CD8-positive, alpha-beta T cell (primary cell): ENCODE measurements at regions of chrX and their contacts with region 1.

Region 1: DNA sequence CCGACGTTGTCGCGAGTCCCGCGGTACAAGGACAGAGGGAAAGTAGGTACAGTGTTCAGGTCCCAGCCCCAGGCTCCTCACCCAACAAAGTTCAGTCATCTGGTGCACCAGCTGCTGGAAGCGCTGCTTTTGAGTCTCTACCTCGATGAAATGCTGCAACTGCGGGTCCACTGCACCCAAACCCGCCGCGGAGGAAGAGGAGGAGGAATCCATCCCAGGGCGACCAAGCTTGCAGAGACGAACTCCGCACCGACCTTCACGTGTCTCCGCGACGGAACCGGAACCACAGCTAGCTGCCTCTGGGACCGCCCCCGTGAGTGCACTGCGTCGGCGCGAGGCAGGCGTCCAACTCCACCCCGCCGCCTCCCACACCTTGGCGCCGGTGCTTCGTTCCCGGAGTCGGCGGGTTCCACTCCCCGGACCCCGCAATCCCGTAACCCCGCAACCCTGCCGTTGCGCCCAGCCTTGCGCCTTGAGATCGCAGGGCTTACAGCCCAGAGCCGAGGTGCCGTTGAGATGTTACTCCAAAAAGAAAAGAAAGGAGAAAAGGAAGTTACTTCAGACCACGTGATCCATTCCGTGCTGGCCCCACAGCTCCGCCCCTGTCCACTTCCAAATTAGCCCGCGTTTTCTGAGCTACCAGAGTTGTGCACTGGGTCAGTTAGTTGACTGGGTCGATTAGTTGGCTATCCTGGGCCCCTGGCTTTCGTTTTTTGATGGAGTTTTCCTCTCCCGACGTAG is at the start of gene TIMM8A:
- DNase-seq: peak; percentile 50 to 85 (median 77)
- ATAC-seq: peak; percentile 98
- H3K4me3 ChIP-seq: peak within 1 kb of the TSS; percentile 90 to 97
- H3K4me3 Mint-ChIP-seq: peak within 1 kb of the TSS; percentile 91
- H3K27ac ChIP-seq: peak within 1 kb of the TSS; percentile 78 to 90
- H3K27ac Mint-ChIP-seq: peak within 1 kb of the TSS; percentile 91
- H3K4me1 ChIP-seq: peaks cover 9% of the 10 kb centered on the region
- H3K4me1 Mint-ChIP-seq: peaks cover 16% of the 10 kb centered on the region
- H3K27me3 ChIP-seq: no peaks in the 10 kb centered on the region
- H3K27me3 Mint-ChIP-seq: no peaks in the 10 kb centered on the region
- CTCF ChIP-seq: no peak
- total RNA-seq, gene TIMM8A: 7.0 to 8.1 TPM

Region 2: GRCh38 chrX:100819837-100820666 is 528.6 kb before region 1 on chrX and contains the start of gene CSTF2:
- CTCF ChIA-PET with region 1: no interaction called
- POLR2A ChIA-PET with region 1: no interaction called
- intact Hi-C with region 1: loop called in 1 of 2 experiments (anchors 2 kb)
- DNase-seq: peak; percentile 53 to 90 (median 78)
- ATAC-seq: peak; percentile 95
- H3K4me3 ChIP-seq: peak within 1 kb of the TSS; percentile 65 to 83
- H3K4me3 Mint-ChIP-seq: peak within 1 kb of the TSS; percentile 90
- H3K27ac ChIP-seq: peak within 1 kb of the TSS; percentile 87 to 92
- H3K27ac Mint-ChIP-seq: peak within 1 kb of the TSS; percentile 90
- H3K4me1 ChIP-seq: no peaks in the 10 kb centered on the region
- H3K4me1 Mint-ChIP-seq: peaks cover 18% of the 10 kb centered on the region
- H3K27me3 ChIP-seq: no peaks in the 10 kb centered on the region
- H3K27me3 Mint-ChIP-seq: peaks cover 4% of the 10 kb centered on the region
- CTCF ChIP-seq: no peak
- total RNA-seq, gene CSTF2: 10.1 to 10.6 TPM

Region 3: GRCh38 chrX:101051549-101052302 is 296.9 kb before region 1 on chrX and contains the start of gene TRMT2B:
- CTCF ChIA-PET with region 1: no interaction called
- POLR2A ChIA-PET with region 1: no interaction called
- intact Hi-C with region 1: loop called in 1 of 2 experiments (anchors 5 kb)
- DNase-seq: peak; percentile 56 to 88 (median 80)
- ATAC-seq: peak; percentile 85
- H3K4me3 ChIP-seq: peak within 1 kb of the TSS; percentile 51 to 70
- H3K4me3 Mint-ChIP-seq: peak within 1 kb of the TSS; percentile 91
- H3K27ac ChIP-seq: peak within 1 kb of the TSS; percentile 94 to 96
- H3K27ac Mint-ChIP-seq: peak within 1 kb of the TSS; percentile 98
- H3K4me1 ChIP-seq: peaks cover 11% of the 10 kb centered on the region
- H3K4me1 Mint-ChIP-seq: peaks cover 29% of the 10 kb centered on the region
- H3K27me3 ChIP-seq: no peaks in the 10 kb centered on the region
- H3K27me3 Mint-ChIP-seq: no peaks in the 10 kb centered on the region
- CTCF ChIP-seq: no peak
- total RNA-seq, gene TRMT2B: 27.8 to 28.0 TPM

Region 4: DNA sequence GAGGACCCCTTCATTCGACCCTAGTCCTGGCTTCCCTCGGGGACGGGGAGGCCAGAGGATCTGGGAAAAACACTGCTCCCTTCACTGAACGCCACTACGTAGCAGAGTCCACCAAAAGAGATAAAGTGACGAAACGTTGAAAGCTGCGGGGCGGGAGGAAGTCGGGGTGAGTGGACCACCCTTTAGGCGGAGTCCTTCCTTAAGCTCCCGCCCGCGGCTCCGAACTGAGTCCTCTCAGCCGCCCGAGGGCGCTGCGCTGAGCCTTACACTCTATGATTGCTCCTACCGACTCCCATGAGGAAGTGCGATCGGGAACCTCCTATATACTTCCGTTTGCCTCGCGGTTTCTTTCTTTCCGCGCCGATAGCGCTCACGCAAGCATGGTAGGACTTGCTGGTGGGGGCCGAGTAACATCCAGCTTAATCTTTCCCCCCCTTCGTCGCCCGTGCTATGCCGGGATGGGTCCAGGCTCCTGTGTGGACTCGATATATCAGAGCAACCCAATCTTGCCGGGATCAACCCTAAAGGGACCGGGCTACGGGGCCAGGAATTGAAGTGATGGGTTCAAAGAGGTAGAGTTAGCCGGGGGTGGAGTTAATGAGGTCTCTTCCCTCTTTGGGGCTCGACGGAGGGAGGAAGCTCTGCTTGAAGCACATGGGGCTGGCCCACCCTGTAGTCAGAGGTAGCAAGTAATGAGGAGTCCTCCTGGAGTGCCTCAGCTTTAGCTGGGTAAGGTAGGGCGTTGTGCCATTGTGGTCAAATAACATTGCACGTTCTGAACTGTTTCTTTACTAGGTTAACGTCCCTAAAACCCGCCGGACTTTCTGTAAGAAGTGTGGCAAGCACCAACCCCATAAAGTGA is 42.3 kb after region 1 on chrX and contains the start of gene RPL36A:
- CTCF ChIA-PET with region 1: interaction called, 4 read pairs
- POLR2A ChIA-PET with region 1: interaction called, 9 read pairs
- intact Hi-C with region 1: loop called (anchors 1 to 2 kb)
- DNase-seq: peak; percentile 50 to 91 (median 78)
- ATAC-seq: peak; percentile 92
- H3K4me3 ChIP-seq: peak within 1 kb of the TSS; percentile 49 to 69
- H3K4me3 Mint-ChIP-seq: peak within 1 kb of the TSS; percentile 91
- H3K27ac ChIP-seq: peak within 1 kb of the TSS; percentile 53 to 87
- H3K27ac Mint-ChIP-seq: peak within 1 kb of the TSS; percentile 95
- H3K4me1 ChIP-seq: peaks cover 15% of the 10 kb centered on the region
- H3K4me1 Mint-ChIP-seq: peaks cover 30% of the 10 kb centered on the region
- H3K27me3 ChIP-seq: no peaks in the 10 kb centered on the region
- H3K27me3 Mint-ChIP-seq: no peaks in the 10 kb centered on the region
- CTCF ChIP-seq: peak; percentile 54
- total RNA-seq, gene RPL36A: 308 to 378 TPM

Region 5: DNA sequence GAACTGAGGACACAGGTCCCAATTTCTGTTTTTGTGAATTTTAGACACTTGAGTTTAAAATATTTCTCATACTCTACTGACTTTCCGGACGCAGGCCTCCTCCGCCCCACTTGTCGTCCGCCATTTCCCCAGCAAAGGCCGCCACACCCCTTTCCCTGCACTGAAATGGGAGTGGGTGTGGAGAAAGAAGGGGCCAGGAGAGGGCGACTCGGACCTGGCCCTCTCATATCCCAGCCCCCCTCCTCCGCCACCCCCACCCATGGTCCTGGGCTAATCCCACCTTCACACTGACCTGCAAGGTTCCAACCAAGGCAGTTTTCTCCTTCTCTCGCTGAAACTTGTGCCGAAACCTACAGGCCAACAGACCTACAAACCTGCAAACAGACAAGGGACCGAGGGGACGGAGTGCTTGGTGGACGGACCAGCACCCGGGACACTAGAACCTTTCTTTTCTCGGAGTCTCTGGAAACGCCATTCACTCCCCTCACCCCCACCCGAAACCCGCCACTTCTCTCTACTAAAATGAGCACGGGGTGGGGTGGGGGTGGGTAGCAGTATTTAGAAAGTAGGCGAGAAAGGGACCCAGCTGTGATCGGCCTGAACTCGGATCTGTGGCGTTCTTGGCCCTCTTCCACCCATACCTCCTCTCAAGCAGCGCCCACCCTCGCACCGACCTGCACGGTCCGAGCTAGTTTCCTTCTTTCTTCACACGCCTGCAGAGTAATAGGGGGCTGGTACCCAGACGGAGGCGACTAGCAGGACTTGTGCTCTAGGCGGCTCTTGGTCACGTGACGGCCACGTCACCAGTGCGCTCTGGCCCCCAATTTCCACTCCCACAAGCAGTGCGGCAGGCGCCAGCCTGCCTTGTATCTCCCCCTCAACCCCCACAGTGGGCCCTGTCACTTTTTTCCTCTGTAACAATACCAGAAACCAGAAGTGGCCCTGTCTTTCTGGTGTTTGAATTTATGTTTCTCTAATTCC is 268.9 kb after region 1 on chrX and contains the start of gene ARMCX6:
- CTCF ChIA-PET with region 1: no interaction called
- POLR2A ChIA-PET with region 1: no interaction called
- intact Hi-C with region 1: loop called in 1 of 2 experiments (anchors 5 kb)
- DNase-seq: peak; percentile 36 to 90 (median 72)
- ATAC-seq: peak; percentile 80
- H3K4me3 ChIP-seq: peak within 1 kb of the TSS; percentile 62 to 74
- H3K4me3 Mint-ChIP-seq: peak within 1 kb of the TSS; percentile 91
- H3K27ac ChIP-seq: peak within 1 kb of the TSS; percentile 59 to 63
- H3K27ac Mint-ChIP-seq: peak within 1 kb of the TSS; percentile 93
- H3K4me1 ChIP-seq: peaks cover 11% of the 10 kb centered on the region
- H3K4me1 Mint-ChIP-seq: peaks cover 16% of the 10 kb centered on the region
- H3K27me3 ChIP-seq: no peaks in the 10 kb centered on the region
- H3K27me3 Mint-ChIP-seq: no peaks in the 10 kb centered on the region
- CTCF ChIP-seq: no peak
- total RNA-seq, gene ARMCX6: 45.6 to 46.4 TPM